GM10248 (cell line): ENCODE measurements at regions of chr6 and their contacts with region 1.

Region 1: GRCh38 chr6:30541515-30542403 is 14.5 kb downstream of the GNL1 start:
- DNase-seq: peak; percentile 74
- CTCF ChIP-seq: peak; percentile 100

Region 2: DNA sequence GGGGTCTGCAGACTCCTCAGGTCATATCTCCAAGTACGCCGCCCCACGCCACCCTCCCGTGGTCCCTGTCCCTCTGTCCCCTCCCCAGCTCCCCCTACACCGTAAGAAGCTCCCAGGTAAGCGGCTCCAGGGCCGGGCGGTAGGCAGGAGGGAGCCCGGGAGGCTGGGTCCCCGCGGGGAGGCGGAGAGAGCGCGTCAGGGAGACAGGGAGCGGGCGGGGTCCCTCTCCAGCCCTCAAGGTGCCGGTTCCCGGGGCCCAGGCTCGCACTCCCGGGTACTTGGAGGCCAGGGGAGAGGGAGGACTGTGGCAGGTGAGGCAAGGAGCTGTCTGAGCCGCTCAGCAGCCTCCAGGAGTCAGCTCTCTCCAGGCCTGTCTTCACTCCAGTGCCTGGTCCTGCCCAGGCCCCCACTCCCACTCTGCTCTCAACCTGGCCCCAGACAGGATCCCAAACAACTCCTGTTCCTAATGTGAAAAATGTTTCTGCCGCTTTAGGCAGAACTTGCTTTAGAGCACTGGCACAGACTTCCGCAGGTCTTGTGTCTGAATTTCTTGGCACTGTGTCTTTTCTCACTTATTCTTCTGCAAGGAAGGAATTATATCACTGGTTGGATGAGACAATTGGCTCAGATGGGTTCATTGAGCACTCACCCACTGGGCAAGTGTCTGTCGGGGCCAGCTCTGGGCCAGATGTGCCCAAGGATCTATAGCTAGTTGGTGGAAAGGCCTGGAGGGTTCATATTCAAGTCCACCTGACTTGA is 677.5 kb before region 1 on chr6:
- CTCF ChIA-PET with region 1: no interaction called
- POLR2A ChIA-PET with region 1: no interaction called
- DNase-seq: no peak
- CTCF ChIP-seq: no peak

Region 3: GRCh38 chr6:30453508-30454116 is 88.1 kb before region 1 on chr6:
- CTCF ChIA-PET with region 1: interaction called, 25 read pairs
- POLR2A ChIA-PET with region 1: no interaction called
- DNase-seq: peak; percentile 91
- CTCF ChIP-seq: peak; percentile 82

Region 4: DNA sequence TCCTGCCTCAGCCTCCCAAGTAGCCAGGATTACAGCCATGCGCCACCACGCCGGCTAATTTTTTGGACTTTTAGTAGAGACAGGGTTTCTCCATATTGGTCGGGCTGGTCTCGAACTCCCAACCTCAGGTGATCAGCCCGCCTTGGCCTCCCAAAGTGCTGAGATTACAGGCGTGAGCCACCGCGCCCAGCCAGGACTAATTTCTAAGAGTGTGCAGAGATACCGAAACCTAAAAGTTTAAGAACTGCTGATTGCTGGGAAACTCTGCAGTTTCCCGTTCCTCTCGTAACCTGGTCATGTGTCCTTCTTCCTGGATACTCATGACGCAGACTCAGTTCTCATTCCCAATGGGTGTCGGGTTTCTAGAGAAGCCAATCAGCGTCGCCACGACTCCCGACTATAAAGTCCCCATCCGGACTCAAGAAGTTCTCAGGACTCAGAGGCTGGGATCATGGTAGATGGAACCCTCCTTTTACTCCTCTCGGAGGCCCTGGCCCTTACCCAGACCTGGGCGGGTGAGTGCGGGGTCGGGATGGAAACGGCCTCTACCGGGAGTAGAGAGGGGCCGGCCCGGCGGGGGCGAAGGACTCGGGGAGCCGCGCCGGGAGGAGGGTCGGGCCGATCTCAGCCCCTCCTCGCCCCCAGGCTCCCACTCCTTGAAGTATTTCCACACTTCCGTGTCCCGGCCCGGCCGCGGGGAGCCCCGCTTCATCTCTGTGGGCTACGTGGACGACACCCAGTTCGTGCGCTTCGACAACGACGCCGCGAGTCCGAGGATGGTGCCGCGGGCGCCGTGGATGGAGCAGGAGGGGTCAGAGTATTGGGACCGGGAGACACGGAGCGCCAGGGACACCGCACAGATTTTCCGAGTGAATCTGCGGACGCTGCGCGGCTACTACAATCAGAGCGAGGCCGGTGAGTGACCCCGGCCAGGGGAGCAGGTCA is 52.4 kb before region 1 on chr6 and contains the start of gene HLA-E:
- CTCF ChIA-PET with region 1: interaction called, 278 read pairs
- POLR2A ChIA-PET with region 1: interaction called, 3 read pairs
- DNase-seq: peak; percentile 93
- CTCF ChIP-seq: no peak

Region 5: GRCh38 chr6:30508890-30509736 is 32.6 kb before region 1 on chr6:
- CTCF ChIA-PET with region 1: interaction called, 49 read pairs
- POLR2A ChIA-PET with region 1: interaction called, 6 read pairs
- DNase-seq: peak; percentile 50
- CTCF ChIP-seq: no peak

Region 6: DNA sequence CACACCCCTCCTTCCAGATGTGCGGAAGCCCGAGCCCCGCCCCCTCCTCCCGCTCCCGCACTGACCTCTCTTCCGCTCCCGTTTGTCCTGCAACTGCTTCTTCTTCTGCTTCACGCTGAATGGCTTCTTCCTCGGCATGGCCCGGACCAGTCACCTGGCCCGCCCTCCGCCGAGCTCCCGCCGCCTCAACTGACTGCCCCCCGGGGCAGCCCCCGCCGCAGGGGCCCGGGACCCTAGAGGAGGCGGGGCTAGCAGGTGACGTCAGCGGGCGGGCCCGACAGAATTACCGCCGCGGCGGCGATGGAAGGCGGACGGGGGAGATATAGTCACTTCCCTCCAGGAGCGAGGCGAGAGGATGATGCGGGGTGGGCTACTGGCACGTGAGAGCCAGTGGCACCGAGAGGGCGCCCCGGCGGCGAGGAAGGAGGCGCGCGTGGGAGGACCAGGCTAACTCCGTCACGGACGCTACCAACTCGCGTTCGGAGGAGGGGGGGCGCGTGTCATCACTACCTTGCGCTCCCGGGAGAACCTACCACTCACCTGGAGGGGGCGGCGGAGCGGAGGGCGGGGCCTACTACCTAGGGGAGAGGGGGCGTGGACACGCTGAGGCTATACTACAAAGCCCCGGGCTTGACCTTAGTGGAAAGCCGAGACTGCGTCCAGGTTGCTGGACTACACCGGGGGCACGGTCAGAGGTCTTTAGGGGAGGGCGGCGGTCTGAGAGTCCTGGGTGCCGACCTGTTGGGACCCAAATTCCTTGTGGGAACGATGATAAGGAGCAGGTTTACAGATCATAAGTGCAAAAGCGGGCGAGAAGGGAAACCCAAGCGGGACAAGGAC is 14.5 kb after region 1 on chr6 and contains the start of gene GNL1:
- CTCF ChIA-PET with region 1: interaction called, 100 read pairs
- POLR2A ChIA-PET with region 1: interaction called, 5 read pairs
- DNase-seq: peak; percentile 96
- CTCF ChIP-seq: no peak

Region 7: DNA sequence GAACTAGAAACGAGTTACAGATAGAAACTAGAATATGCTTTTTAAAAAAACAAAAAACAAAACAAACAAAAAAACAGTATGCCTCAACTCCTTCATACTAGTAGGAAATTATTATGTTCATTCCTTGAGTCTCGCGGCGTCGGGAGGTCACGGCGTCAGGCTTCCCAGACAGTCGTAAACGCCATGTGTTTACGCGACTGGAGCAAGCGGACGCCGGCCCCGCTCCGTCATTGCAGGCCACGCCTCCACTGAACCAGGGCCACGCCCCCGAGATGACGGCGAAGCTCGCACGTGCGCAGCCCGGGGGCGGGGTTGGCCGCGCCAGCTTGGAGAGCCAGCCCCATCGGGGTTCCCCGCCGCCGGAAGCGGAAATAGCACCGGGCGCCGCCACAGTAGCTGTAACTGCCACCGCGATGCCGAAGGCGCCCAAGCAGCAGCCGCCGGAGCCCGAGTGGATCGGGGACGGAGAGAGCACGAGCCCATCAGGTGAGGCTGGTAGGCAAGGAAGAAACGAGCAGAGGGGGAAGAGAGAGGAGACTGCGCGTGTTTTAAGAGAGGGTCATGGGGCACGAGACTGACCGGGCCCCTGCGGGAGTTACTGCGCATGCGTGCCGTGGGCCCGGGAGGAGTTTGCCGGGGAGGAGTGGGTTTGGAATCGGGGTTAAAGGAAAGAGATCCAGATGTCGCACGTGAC is 29.5 kb after region 1 on chr6 and contains the start of gene ABCF1:
- CTCF ChIA-PET with region 1: interaction called, 31 read pairs
- POLR2A ChIA-PET with region 1: interaction called, 4 read pairs
- DNase-seq: peak; percentile 99
- CTCF ChIP-seq: no peak

Region 8: DNA sequence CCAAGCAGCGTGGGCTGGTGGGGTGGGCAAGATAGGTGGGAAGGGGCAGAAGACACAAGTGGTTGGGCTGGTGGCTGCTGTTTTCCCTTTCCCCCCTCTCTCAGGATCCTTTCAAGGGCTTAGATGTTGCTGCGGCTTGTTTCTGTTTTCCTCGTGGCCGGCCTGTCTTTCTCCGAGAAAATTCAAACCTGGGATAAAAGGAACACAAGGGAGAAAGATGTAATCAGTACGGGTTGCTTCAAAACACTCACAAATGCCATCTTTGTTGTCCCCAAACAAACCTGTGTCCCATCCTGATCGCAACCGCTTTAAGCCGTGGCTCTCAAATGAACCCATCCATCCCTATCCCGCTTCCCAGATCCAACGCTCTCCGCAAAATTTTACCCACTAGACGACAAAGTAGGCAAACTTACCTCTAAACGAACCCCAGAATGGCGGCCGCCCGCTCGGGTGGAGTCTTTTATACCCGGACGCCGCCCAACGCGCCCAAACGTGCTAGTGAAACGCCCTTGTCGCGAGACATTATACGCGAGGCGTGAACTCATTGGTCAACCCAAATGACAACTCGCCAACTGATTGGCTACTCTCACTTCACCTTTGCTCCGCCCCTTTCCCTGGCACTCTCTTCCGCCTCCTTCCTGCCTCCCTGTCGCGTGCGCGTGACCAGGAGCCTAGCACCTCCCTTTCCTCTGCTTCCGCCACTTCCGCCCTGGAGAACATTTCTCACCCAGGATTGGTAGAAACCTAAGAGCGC is 75.2 kb after region 1 on chr6 and contains the start of gene PPP1R10:
- CTCF ChIA-PET with region 1: interaction called, 13 read pairs
- POLR2A ChIA-PET with region 1: interaction called, 5 read pairs
- DNase-seq: peak; percentile 94
- CTCF ChIP-seq: no peak